ENCODE measurements at regions of chr20 and their contacts with region 1.

Region 1: GRCh38 chr20:33731693-33732165 is at the start of gene ZNF341:
- DNase-seq: peak in 7 of 9 donors; percentile 84 to 92 (median 88)
- ATAC-seq: peak; percentile 92
- H3K4me3 ChIP-seq: peak within 1 kb of the TSS; percentile 84
- H3K4me3 Mint-ChIP-seq: peak within 1 kb of the TSS; percentile 82 to 97 (median 90)
- H3K27ac ChIP-seq: peak within 1 kb of the TSS; percentile 75
- H3K27ac Mint-ChIP-seq: peak within 1 kb of the TSS; percentile 90 to 98 (median 97)
- H3K4me1 ChIP-seq: peaks cover 3 to 18% of the 10 kb centered on the region in 2 donors
- H3K4me1 Mint-ChIP-seq: peaks cover 12 to 36% (median 20%) of the 10 kb centered on the region in 7 donors
- H3K27me3 ChIP-seq: no peaks in the 10 kb centered on the region
- H3K27me3 Mint-ChIP-seq: peaks cover 0 to 3% (median 0%) of the 10 kb centered on the region in 5 donors
- total RNA-seq, gene ZNF341: 3.5 to 6.1 (median 5.5) TPM

Region 2: DNA sequence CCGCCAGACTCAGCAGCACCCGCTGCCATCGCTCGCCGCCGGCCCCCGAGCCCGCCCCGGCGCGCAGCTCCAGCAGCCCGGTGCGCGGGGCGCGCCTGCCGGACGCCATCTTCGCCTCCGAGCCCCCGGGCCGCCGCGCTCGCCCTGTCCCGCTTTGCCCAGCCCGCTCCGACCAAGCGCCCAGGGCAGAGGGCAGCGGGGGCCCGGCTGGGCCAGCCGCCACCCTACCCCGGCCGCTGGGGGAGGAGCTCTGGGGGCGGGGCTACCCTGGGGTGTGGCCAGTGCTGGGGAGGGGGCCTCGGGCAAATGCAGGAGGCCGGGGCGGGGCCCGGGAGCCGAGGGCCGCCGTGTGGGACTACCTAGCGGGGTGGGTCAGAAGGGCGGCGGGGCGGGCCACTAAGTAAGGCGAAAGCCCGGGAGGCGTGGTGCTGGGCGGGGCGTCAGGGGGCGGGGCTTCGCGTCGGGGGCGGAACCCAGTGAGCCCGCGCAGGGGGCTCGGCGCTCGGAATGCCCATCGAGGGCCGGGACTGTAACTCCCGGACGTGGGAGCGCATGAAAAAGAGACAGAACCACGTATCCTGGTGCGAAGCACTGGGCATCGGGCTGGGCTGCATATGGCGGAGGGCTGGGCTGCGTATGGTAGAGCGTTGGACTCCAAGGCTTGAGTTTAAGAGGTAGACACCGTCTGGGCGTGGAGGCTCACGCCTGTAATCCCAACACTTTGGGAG is 288.1 kb before region 1 on chr20 and contains the start of gene SNTA1:
- CTCF ChIA-PET with region 1: no interaction called
- POLR2A ChIA-PET with region 1: interaction called, 8 read pairs
- intact Hi-C with region 1: loop called in 1 of 2 experiments (anchors 5 kb)
- DNase-seq: peak; percentile 51 to 90 (median 70)
- ATAC-seq: peak; percentile 84
- H3K4me3 ChIP-seq: peak within 1 kb of the TSS; percentile 96
- H3K4me3 Mint-ChIP-seq: peak within 1 kb of the TSS; percentile 82 to 96 (median 92)
- H3K27ac ChIP-seq: peak within 1 kb of the TSS; percentile 62
- H3K27ac Mint-ChIP-seq: peak within 1 kb of the TSS; percentile 69 to 95 (median 90)
- H3K4me1 ChIP-seq: peaks cover 10 to 11% of the 10 kb centered on the region in 2 donors
- H3K4me1 Mint-ChIP-seq: peaks cover 16 to 32% (median 22%) of the 10 kb centered on the region in 7 donors
- H3K27me3 ChIP-seq: no peaks in the 10 kb centered on the region
- H3K27me3 Mint-ChIP-seq: peaks cover 0 to 19% (median 0%) of the 10 kb centered on the region in 5 donors
- total RNA-seq, gene SNTA1: 2.0 to 3.2 (median 2.9) TPM

Region 3: DNA sequence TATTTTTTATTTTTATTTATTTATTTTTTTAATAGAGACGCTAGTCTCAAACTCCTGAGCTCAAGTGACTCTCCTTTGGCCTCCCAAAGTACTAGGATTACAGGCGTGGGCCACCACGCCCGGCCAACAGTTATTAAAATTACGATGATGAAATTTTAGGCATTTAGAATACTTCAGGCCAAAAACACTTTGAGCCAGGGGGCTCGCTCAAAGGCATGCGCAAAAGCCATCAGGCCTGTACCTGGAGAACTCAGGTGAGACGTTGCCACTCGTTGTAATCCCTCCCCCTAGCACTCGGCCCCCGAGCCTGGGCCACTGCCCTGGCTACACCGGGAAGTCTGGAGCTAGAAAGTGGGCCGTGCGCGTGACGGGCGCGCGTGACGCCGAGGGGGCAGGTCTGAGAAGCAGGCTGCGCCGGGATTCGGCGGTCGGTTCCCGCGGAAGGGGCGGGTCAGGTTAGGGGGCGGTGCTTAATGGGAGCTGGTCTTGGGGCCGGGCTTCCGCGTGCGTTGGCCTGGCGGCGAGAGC is 242.2 kb before region 1 on chr20:
- CTCF ChIA-PET with region 1: no interaction called
- POLR2A ChIA-PET with region 1: interaction called, 7 read pairs
- intact Hi-C with region 1: loop called in 1 of 2 experiments (anchors 1 kb)
- DNase-seq: peak; percentile 97 to 99 (median 99)
- ATAC-seq: peak; percentile 97
- H3K4me3 ChIP-seq: peak overlapping the region; percentile 75
- H3K4me3 Mint-ChIP-seq: peak overlapping the region; percentile 84 to 95 (median 88)
- H3K27ac ChIP-seq: peak overlapping the region; percentile 94
- H3K27ac Mint-ChIP-seq: peak overlapping the region; percentile 86 to 96 (median 90)
- H3K4me1 ChIP-seq: peaks cover 4 to 9% of the 10 kb centered on the region in 2 donors
- H3K4me1 Mint-ChIP-seq: peaks cover 0 to 30% (median 13%) of the 10 kb centered on the region in 7 donors
- H3K27me3 ChIP-seq: no peaks in the 10 kb centered on the region
- H3K27me3 Mint-ChIP-seq: no peaks in the 10 kb centered on the region

Region 4: DNA sequence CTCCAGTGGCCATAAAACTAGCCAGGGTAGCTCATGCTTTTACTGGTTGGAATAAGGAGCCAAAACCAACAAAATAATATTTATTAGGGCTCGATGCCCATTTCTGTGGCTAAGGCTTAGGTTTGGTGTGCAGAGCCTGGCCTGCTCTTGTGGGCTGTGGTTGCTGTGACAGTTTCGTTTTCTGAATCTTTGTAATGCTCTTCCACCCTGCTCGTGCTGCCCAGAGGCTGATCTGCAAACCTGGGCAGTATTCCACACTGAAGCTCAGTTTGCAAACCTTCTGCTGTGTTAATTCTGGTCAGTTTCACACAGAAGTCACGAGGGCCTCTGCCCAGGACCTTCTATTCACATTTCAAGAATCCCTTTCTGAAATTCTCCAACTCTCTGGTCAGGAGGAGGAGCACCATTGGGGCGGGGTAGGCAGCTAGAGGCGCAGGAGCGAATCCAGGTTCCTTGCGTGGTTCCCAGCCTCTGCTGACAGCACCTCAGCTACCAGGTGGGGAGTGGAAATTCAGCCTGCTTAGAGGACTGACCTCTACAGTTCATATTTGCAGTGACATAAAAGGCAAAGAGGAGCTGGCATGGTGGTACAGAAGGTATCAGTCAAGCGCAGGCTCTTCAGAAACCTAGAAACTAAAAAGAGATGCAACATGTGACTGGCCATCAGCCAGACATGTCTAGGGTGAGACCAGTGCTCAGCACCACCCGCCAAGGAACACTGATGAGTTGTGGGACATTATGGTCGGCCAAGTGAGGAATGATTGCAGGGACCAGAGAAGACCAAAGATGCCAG is 83.9 kb before region 1 on chr20:
- CTCF ChIA-PET with region 1: no interaction called
- POLR2A ChIA-PET with region 1: no interaction called
- intact Hi-C with region 1: no loop called
- DNase-seq: no peak
- ATAC-seq: no peak
- H3K4me3 ChIP-seq: no peak overlapping the region
- H3K4me3 Mint-ChIP-seq: no peak overlapping the region
- H3K27ac ChIP-seq: no peak overlapping the region
- H3K27ac Mint-ChIP-seq: peak overlapping the region in 5 of 9 donors; percentile 51 to 81 (median 74)
- H3K4me1 ChIP-seq: peaks cover 0 to 14% of the 10 kb centered on the region in 2 donors
- H3K4me1 Mint-ChIP-seq: peaks cover 0 to 7% (median 0%) of the 10 kb centered on the region in 7 donors
- H3K27me3 ChIP-seq: no peaks in the 10 kb centered on the region
- H3K27me3 Mint-ChIP-seq: no peaks in the 10 kb centered on the region

Region 5: DNA sequence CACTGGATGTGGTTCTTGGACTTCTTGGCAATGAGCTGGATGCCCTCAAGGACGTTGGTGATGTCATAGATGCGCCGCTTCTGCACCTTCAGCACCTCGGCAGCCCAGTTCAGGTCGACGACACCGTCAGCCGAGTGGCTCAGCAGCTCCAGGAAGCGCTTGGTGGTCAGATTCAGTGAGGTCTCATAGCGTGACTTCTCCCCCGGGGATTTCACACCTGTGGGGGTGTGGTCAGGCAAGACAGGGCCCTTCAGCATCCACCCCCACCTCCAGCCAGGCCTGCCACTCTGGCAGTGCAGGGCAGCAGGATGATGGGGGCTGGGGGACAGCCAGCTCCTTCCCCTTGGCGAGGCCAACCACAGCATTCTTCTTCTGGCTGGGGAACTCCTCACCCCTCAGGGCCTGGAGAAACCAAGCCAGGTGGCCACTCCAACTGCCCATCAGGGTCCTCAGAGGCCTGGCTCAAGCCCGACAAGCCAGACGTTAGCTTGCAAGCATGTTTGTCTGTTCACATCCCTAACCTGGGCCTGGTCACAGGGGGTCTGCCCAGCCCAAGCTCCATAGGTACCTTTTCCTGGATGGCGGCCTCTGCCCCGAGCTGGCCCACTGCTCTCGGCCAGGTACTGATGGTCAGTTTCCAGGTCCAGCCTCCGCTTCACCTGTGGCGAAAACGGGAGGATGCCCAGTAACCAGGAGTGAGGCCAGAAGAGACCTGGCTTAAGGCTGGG is 51.8 kb before region 1 on chr20:
- CTCF ChIA-PET with region 1: interaction called, 3 read pairs
- POLR2A ChIA-PET with region 1: interaction called, 11 read pairs
- intact Hi-C with region 1: loop called in 1 of 2 experiments (anchors 2 kb)
- DNase-seq: no peak
- ATAC-seq: peak; percentile 59
- H3K4me3 ChIP-seq: no peak overlapping the region
- H3K4me3 Mint-ChIP-seq: peak overlapping the region in 9 of 10 donors; percentile 29 to 87 (median 72)
- H3K27ac ChIP-seq: no peak overlapping the region
- H3K27ac Mint-ChIP-seq: peak overlapping the region in 8 of 9 donors; percentile 28 to 92 (median 81)
- H3K4me1 ChIP-seq: peaks cover 13 to 33% of the 10 kb centered on the region in 2 donors
- H3K4me1 Mint-ChIP-seq: peaks cover 29 to 85% (median 44%) of the 10 kb centered on the region in 7 donors
- H3K27me3 ChIP-seq: no peaks in the 10 kb centered on the region
- H3K27me3 Mint-ChIP-seq: no peaks in the 10 kb centered on the region

Region 6: GRCh38 chr20:33719989-33720709 is 11.6 kb before region 1 on chr20 and contains the start of gene PXMP4:
- CTCF ChIA-PET with region 1: no interaction called
- POLR2A ChIA-PET with region 1: interaction called, 36 read pairs
- intact Hi-C with region 1: loop called (anchors 1 kb)
- DNase-seq: peak; percentile 60 to 97 (median 94)
- ATAC-seq: peak; percentile 98
- H3K4me3 ChIP-seq: peak within 1 kb of the TSS; percentile 87
- H3K4me3 Mint-ChIP-seq: peak within 1 kb of the TSS; percentile 81 to 95 (median 90)
- H3K27ac ChIP-seq: peak within 1 kb of the TSS; percentile 74
- H3K27ac Mint-ChIP-seq: peak within 1 kb of the TSS; percentile 81 to 97 (median 87)
- H3K4me1 ChIP-seq: peaks cover 0 to 22% of the 10 kb centered on the region in 2 donors
- H3K4me1 Mint-ChIP-seq: peaks cover 22 to 36% (median 27%) of the 10 kb centered on the region in 7 donors
- H3K27me3 ChIP-seq: no peaks in the 10 kb centered on the region
- H3K27me3 Mint-ChIP-seq: no peaks in the 10 kb centered on the region
- total RNA-seq, gene PXMP4: 4.5 to 14.3 (median 10.1) TPM

Region 7: DNA sequence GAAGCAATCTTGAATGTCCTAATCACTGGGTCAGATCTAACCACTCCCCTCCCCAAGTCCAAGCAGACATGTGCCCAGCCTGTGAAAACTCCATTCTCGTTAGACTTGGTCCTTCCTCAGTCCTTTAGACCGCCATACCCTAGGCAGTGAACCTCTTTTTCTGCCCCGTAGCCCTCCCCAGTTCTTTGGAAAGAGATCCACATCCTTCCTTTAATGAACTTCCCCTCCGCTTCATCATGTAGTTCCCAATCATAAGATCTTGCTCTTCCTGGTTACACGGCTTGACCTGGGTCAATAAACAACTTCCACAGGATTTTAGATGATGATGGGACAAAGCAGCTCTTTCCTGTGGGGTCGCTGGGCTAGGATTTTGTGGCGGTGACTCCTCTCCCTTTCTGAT is 561.9 kb after region 1 on chr20:
- CTCF ChIA-PET with region 1: no interaction called
- POLR2A ChIA-PET with region 1: no interaction called
- intact Hi-C with region 1: no loop called
- DNase-seq: no peak
- ATAC-seq: no peak
- H3K4me3 ChIP-seq: no peak overlapping the region
- H3K4me3 Mint-ChIP-seq: no peak overlapping the region
- H3K27ac ChIP-seq: no peak overlapping the region
- H3K27ac Mint-ChIP-seq: peak overlapping the region in 1 of 9 donors; percentile 24
- H3K4me1 ChIP-seq: no peaks in the 10 kb centered on the region
- H3K4me1 Mint-ChIP-seq: peaks cover 0 to 7% (median 2%) of the 10 kb centered on the region in 7 donors
- H3K27me3 ChIP-seq: no peaks in the 10 kb centered on the region
- H3K27me3 Mint-ChIP-seq: no peaks in the 10 kb centered on the region

Region 8: DNA sequence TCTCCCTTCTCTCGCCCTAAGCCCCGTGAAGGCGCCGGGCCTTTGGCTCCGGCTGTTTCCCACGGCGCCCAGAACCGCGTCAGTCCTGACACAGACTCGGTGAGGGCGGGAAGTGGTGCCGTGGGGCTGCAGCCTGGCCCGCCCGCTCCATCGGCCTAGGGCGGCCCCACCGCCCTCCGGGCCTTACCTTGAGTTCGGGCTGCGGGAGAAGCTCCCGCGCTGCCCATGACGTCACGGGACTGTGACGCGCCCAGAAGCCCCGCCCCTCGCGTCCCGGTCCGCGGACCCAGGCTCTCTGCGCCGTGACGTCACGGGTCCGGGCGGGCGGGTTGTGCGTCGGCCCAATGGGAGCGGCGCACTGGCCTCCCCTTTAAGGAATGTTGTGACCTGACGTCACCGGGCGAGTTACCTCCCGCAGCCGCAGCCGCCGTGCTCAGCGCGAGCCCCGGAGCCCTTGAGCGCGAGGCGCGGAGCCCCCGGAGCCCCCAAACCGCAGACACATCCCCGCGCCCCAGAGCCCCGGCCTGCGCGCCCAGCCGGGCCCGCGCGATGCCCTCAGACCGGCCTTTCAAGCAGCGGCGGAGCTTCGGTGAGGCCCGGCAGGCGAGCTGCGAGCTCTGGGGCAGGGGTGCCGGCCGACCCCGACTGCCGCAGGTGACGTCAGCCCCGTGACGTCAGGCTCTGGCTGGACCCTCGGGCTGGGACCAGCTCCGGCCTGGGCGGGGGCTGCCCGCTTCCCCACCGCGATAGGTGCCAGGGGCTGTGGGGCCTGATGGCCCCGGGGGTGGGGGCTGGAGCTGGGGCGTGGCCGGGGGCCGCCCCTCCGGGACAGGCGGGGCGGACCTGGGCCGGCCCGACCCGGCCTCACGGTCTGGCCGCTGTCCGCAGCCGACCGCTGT is 826.8 kb after region 1 on chr20 and contains the start of gene MAP1LC3A:
- CTCF ChIA-PET with region 1: no interaction called
- POLR2A ChIA-PET with region 1: no interaction called
- intact Hi-C with region 1: loop called in 1 of 2 experiments (anchors 2 kb)
- DNase-seq: peak; percentile 87 to 96 (median 89)
- ATAC-seq: peak; percentile 94
- H3K4me3 ChIP-seq: peak within 1 kb of the TSS; percentile 70
- H3K4me3 Mint-ChIP-seq: peak within 1 kb of the TSS; percentile 69 to 90 (median 85)
- H3K27ac ChIP-seq: peak within 1 kb of the TSS; percentile 97
- H3K27ac Mint-ChIP-seq: peak within 1 kb of the TSS; percentile 78 to 95 (median 88)
- H3K4me1 ChIP-seq: peaks cover 4 to 8% of the 10 kb centered on the region in 2 donors
- H3K4me1 Mint-ChIP-seq: peaks cover 8 to 14% (median 13%) of the 10 kb centered on the region in 7 donors
- H3K27me3 ChIP-seq: no peaks in the 10 kb centered on the region
- H3K27me3 Mint-ChIP-seq: no peaks in the 10 kb centered on the region
- total RNA-seq, gene MAP1LC3A: 0.60 to 10.3 (median 6.3) TPM

Measured in naive thymus-derived CD4-positive, alpha-beta T cell (primary cell).